HEK293 (cell line): ENCODE measurements at regions of chr15 and their contacts with region 1.

Region 1: DNA sequence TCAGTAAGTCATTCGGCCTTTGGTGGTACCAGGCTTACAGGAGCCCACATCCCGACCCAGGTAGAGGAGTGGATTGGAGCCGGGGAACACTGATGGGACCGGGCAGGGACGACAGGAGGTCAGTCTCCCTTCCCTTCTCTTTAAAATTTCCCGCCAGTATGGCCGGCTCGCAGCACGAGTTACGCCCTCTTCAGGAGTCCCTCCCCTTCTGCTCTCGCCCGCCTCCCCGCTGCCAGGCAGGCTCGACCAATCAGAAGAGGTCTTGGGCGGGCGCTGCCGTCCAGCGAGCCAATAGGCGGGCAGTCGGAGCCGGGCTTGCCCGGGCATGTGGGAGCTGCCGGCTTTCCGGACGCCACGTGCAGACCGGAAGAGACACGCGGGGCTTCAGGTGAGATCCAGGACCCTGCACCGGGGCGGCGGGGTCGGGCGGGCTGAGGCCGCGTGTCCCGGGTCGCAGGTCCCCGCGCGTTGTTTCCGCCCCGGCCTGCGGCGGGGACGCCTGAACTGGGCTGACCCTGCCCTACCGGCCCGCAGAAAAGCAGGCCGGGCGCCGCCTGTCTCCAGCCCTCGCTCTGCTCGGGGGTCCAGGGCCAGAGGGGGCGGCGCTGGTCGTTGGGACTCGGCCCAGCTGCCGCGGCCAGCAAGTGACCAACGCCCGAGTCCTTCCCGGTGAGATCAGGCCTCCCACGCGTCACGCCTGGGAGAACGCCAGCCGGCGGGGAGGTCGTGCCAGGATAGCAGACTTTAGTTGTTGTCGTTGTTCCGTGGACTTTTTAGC is at the start of gene AEN:
- H3K4me3 ChIP-seq: peak within 1 kb of the TSS; percentile 86
- H3K27ac ChIP-seq: peak within 1 kb of the TSS; percentile 98
- H3K4me1 ChIP-seq: peaks cover 19% of the 10 kb centered on the region
- CTCF ChIP-seq: peak; percentile 40; the same call in 1 of the 2 replicates

Region 2: GRCh38 chr15:88467073-88467934 is 153.9 kb before region 1 on chr15 and contains the starts of genes MRPL46 and MRPS11:
- CTCF ChIA-PET with region 1: interaction called, 22 read pairs
- POLR2A ChIA-PET with region 1: interaction called, 12 read pairs
- H3K4me3 ChIP-seq: peak within 1 kb of the TSS; percentile 96
- H3K27ac ChIP-seq: peak within 1 kb of the TSS; percentile 83
- H3K4me1 ChIP-seq: peaks cover 4% of the 10 kb centered on the region; the same call in 1 of the 2 replicates
- CTCF ChIP-seq: no peak

Region 3: DNA sequence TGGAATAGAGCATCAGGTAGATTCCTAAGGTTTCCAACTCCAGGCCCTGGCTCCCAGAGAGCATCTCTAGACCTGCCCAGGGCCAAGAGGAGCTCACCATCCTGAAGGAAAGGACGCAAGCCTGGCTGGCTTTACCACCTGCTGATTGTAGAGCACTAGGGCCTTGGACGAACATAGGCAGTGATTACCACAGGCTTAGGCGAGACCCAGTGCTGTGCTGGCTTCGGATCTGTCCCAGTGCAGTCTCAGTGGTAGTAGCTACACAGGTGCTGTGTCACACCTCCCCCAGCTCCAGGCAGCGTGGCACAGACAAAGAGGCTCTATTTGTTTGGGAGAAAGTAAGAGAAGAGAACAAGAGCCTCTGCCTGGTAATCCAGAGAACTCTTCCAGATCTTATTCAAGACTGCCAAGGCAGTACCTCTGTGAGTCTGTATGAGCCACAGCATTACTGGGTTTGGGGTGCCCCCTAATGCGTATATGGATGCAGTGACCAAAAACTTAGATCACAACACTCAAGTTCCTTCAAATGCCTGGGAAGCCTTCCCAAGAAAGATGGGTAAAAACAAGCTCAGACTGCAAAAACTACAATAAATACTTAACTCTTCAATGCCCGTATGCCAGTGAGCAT is 43.1 kb after region 1 on chr15:
- CTCF ChIA-PET with region 1: no interaction called
- POLR2A ChIA-PET with region 1: no interaction called
- H3K4me3 ChIP-seq: no peak overlapping the region
- H3K27ac ChIP-seq: no peak overlapping the region
- H3K4me1 ChIP-seq: no peaks in the 10 kb centered on the region
- CTCF ChIP-seq: no peak; the same call in 1 of the 2 replicates